Heart right ventricle (tissue), 16 donors: ENCODE measurements at regions of chr11 and their contacts with region 1.

Region 1: DNA sequence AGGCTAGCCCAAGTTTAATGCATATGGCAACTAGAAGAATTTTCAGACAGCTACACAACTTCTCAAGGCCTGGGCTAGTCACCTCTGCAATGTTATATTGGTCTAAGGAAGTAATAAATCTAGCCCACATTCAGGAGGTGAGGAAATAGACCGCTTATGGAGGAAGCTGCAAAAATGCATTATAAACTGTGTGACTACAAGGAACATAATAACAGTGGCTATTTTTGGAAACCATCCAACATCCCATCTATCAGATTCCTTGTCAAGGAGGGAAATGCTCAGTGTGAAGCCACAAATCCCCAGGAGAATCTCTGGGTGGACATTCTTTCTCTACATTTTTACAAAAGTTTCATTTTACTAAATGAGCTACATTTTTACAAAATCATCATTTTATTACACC is 76.1 kb downstream of the BBOX1 start:
- DNase-seq: no peak
- ATAC-seq: no peak
- H3K4me3 ChIP-seq: no peak overlapping the region
- H3K27ac ChIP-seq: no peak overlapping the region
- H3K4me1 ChIP-seq: no peaks in the 10 kb centered on the region
- H3K27me3 ChIP-seq: no peaks in the 10 kb centered on the region
- CTCF ChIP-seq: no peak

Region 2: GRCh38 chr11:26993965-26994457 is 122.7 kb before region 1 on chr11 and contains the start of gene FIBIN:
- intact Hi-C with region 1: loop called in 1 of 10 experiments (anchors 10 kb)
- DNase-seq: peak; percentile 24 to 27
- ATAC-seq: peak; percentile 31 to 69 (median 56)
- H3K4me3 ChIP-seq: peak within 1 kb of the TSS; percentile 19 to 64 (median 52)
- H3K27ac ChIP-seq: peak within 1 kb of the TSS; percentile 49 to 88 (median 80)
- H3K4me1 ChIP-seq: peaks cover 0 to 13% (median 0%) of the 10 kb centered on the region in 9 donors
- H3K27me3 ChIP-seq: peaks cover 0 to 20% (median 6%) of the 10 kb centered on the region in 7 donors
- CTCF ChIP-seq: no peak
- total RNA-seq, gene FIBIN: 3.5 to 13.8 (median 6.8) TPM